CD4-positive, alpha-beta memory T cell (primary cell): ENCODE measurements at regions of chr1 and their contacts with region 1.

Region 1: GRCh38 chr1:2255420-2256369 is 27.6 kb downstream of the SKI start:
- DNase-seq: peak; percentile 87 to 96 (median 92)
- H3K4me3 ChIP-seq: no peak overlapping the region
- H3K4me3 Mint-ChIP-seq: no peak overlapping the region
- H3K27ac ChIP-seq: peak overlapping the region; percentile 95
- H3K27ac Mint-ChIP-seq: no peak overlapping the region
- H3K4me1 ChIP-seq: peaks cover 87% of the 10 kb centered on the region
- H3K4me1 Mint-ChIP-seq: peaks cover 31 to 59% (median 40%) of the 10 kb centered on the region in 4 donors
- H3K27me3 ChIP-seq: no peaks in the 10 kb centered on the region
- H3K27me3 Mint-ChIP-seq: no peaks in the 10 kb centered on the region

Region 2: GRCh38 chr1:2205191-2205952 is 50.3 kb before region 1 on chr1:
- CTCF ChIA-PET with region 1: no interaction called
- POLR2A ChIA-PET with region 1: interaction called, 14 read pairs
- intact Hi-C with region 1: loop called (anchors 2 kb)
- DNase-seq: peak; percentile 90 to 95 (median 91)
- H3K4me3 ChIP-seq: peak overlapping the region; percentile 6 to 47
- H3K4me3 Mint-ChIP-seq: peak overlapping the region; percentile 48 to 71 (median 68)
- H3K27ac ChIP-seq: peak overlapping the region; percentile 38
- H3K27ac Mint-ChIP-seq: peak overlapping the region in 3 of 7 donors; percentile 35 to 79 (median 62)
- H3K4me1 ChIP-seq: peaks cover 26% of the 10 kb centered on the region
- H3K4me1 Mint-ChIP-seq: peaks cover 0 to 15% (median 3%) of the 10 kb centered on the region in 4 donors
- H3K27me3 ChIP-seq: no peaks in the 10 kb centered on the region
- H3K27me3 Mint-ChIP-seq: no peaks in the 10 kb centered on the region

Region 3: DNA sequence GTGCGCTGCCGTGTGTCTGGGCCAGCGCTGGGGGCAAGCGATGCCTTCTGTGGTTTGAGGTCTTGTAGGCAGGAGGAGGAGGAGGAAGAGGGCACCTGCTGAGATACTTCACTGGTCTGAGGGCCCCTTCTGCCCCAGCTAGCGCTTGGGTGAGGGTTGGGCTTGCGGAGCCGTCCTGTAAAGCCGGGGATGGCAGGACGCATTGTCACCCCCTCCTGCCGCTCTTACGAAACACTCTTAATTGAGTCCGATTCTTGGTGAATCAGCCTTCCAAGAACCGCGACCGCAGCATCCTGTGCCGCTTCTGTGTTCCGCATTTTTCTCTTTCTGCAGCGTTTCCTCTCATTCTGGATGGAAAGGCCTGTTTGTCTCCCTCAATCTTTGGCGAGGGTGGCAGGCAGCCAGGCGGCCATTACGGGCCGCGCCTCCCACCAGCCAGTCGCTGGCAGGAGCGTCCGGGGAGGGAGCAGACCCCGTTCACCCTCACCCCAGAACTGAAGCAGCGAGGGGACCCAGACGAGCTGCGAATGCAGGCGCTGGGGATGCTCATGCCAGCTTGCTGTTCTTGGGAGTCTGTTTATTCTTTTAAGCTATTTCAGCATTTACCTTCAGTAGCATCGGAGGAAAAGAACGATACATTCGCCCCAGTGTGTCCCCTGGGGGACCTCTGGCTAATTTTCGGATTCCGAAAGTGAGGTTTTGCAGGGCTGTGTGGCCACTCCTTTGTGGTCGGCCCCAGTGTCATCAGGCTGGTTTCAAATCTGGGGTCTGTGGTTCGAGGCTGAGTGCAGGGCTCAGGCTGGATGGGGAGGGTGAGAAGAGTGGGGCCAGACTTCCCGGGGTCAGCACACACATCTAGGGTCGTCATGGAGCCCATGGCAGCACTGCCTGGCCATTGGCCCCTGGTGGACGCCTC is 35.2 kb after region 1 on chr1:
- CTCF ChIA-PET with region 1: interaction called, 3 read pairs
- POLR2A ChIA-PET with region 1: interaction called, 16 read pairs
- intact Hi-C with region 1: loop called (anchors 2 kb)
- DNase-seq: peak; percentile 73 to 91 (median 79)
- H3K4me3 ChIP-seq: peak overlapping the region; percentile 32 to 69
- H3K4me3 Mint-ChIP-seq: peak overlapping the region; percentile 86 to 95 (median 88)
- H3K27ac ChIP-seq: peak overlapping the region; percentile 73
- H3K27ac Mint-ChIP-seq: peak overlapping the region; percentile 92 to 99 (median 98)
- H3K4me1 ChIP-seq: peaks cover 91% of the 10 kb centered on the region
- H3K4me1 Mint-ChIP-seq: peaks cover 39 to 97% (median 78%) of the 10 kb centered on the region in 4 donors
- H3K27me3 ChIP-seq: no peaks in the 10 kb centered on the region
- H3K27me3 Mint-ChIP-seq: no peaks in the 10 kb centered on the region

Region 4: GRCh38 chr1:2314803-2315673 is 59.3 kb after region 1 on chr1:
- CTCF ChIA-PET with region 1: interaction called, 5 read pairs
- POLR2A ChIA-PET with region 1: interaction called, 13 read pairs
- intact Hi-C with region 1: loop called (anchors 1 kb)
- DNase-seq: peak; percentile 65 to 71 (median 67)
- H3K4me3 ChIP-seq: no peak overlapping the region
- H3K4me3 Mint-ChIP-seq: peak overlapping the region in 6 of 8 donors; percentile 21 to 70 (median 55)
- H3K27ac ChIP-seq: peak overlapping the region; percentile 63
- H3K27ac Mint-ChIP-seq: peak overlapping the region in 5 of 7 donors; percentile 36 to 79 (median 74)
- H3K4me1 ChIP-seq: peaks cover 42% of the 10 kb centered on the region
- H3K4me1 Mint-ChIP-seq: peaks cover 2 to 9% (median 4%) of the 10 kb centered on the region in 4 donors
- H3K27me3 ChIP-seq: no peaks in the 10 kb centered on the region
- H3K27me3 Mint-ChIP-seq: no peaks in the 10 kb centered on the region